H1 (cell line): ENCODE measurements at regions of chr17 and their contacts with region 1.

Region 1: DNA sequence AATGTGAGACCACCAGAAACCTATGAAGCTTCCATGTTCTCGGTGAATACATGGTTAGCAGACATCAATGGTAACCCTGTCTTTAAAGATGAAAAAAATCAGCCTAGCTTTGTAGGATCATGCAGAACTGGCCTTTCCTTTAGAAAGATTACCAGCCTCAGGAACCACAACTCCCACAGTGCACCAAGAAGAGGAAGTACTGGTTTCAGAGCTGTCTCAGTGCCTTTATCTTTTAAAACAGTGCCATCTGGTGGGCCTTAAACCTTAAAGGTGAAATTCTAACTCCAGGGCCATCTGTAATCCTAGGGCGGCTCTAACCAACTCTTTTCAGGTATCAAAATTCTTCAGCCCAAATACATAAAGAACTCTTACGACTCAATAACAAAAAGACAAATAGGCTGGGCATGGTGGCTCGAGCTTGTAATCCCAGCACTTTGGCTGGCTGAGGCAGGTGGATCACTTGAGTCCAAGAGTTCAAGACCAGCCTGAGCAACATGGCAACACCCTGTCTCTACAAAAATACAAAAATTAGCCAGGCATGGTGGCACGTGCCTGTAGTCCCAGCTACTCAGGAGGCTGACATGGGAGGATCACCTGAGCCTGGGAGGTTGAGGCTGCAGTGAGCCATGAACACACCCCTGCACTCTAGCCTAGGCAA is 5.4 kb downstream of the ATPAF2 start:
- DNase-seq: peak in 1 of 2 experiments; percentile 13
- H3K4me3 ChIP-seq: no peak overlapping the region
- H3K27ac ChIP-seq: no peak overlapping the region
- H3K4me1 ChIP-seq: peaks cover 0 to 3% (median 0%) of the 10 kb centered on the region in 4 experiments; a peak in 2 of 7 replicates
- H3K27me3 ChIP-seq: no peaks in the 10 kb centered on the region
- CTCF ChIP-seq: peak in 2 of 3 experiments; percentile 60 to 69; a peak in 3 of 4 replicates
- EP300 ChIP-seq: no peak
- POLR2A ChIP-seq: no peak
- RAD21 ChIP-seq: peak; percentile 88

Region 2: GRCh38 chr17:17985555-17985954 is 48.0 kb before region 1 on chr17:
- CTCF ChIA-PET with region 1: interaction called, 25 read pairs
- POLR2A ChIA-PET with region 1: no interaction called
- DNase-seq: no peak
- H3K4me3 ChIP-seq: no peak overlapping the region
- H3K27ac ChIP-seq: no peak overlapping the region
- H3K4me1 ChIP-seq: no peaks in the 10 kb centered on the region; a peak in 1 of 7 replicates
- H3K27me3 ChIP-seq: no peaks in the 10 kb centered on the region; a peak in 1 of 7 replicates
- CTCF ChIP-seq: peak; percentile 39 to 53 (median 51)
- EP300 ChIP-seq: no peak
- POLR2A ChIP-seq: no peak
- RAD21 ChIP-seq: peak; percentile 44 to 60

Region 3: DNA sequence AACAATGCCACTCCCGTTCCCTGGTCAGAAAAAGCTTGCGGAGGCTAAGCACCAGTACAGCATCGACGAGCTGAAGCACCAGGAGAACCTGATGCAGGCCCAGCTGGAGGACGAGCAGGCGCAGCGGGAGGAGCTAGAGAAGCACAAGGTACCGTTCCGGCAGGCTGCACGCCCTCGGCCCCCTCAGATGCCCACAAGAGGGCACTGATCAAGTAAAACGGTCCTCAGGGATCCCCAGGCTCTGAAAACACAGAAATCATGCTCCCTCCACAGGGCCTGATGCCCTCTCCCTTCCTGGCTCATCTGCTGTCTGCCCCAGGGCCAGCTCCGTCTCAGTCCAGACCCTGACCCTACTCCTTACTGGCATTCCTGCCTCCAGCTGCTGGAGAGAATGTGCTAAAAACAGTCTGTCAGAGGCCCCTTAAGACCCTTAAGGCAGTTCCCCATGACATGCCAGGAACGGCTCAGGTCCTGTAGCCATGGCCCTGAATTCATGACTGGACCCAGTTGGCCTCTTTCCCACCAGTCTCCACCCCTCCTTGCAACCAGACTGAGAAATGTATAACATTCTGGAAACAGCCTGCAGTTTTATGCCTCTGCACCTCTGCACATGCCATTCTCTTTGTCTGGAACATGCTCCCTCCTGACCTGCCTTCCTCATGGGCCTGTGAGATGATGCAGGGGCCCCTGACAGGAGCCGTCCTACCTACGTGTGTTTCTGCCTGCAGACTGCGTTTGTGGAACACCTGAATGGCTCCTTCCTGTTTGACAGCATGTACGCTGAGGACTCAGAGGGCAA is 39.1 kb before region 1 on chr17:
- CTCF ChIA-PET with region 1: interaction called, 40 read pairs
- POLR2A ChIA-PET with region 1: interaction called, 3 read pairs
- DNase-seq: peak; percentile 53 to 77
- H3K4me3 ChIP-seq: no peak overlapping the region
- H3K27ac ChIP-seq: no peak overlapping the region
- H3K4me1 ChIP-seq: peaks cover 0 to 5% (median 0%) of the 10 kb centered on the region in 4 experiments; a peak in 4 of 7 replicates
- H3K27me3 ChIP-seq: no peaks in the 10 kb centered on the region; a peak in 1 of 7 replicates
- CTCF ChIP-seq: peak; percentile 77 to 86 (median 80)
- EP300 ChIP-seq: no peak
- POLR2A ChIP-seq: no peak
- RAD21 ChIP-seq: peak; percentile 54 to 71

Region 4: GRCh38 chr17:18102640-18103039 is 69.1 kb after region 1 on chr17:
- CTCF ChIA-PET with region 1: no interaction called
- POLR2A ChIA-PET with region 1: no interaction called
- DNase-seq: no peak
- H3K4me3 ChIP-seq: no peak overlapping the region
- H3K27ac ChIP-seq: no peak overlapping the region
- H3K4me1 ChIP-seq: no peaks in the 10 kb centered on the region
- H3K27me3 ChIP-seq: no peaks in the 10 kb centered on the region
- CTCF ChIP-seq: no peak
- EP300 ChIP-seq: no peak
- POLR2A ChIP-seq: no peak
- RAD21 ChIP-seq: no peak